ENCODE measurements at regions of chr1 and their contacts with region 1.

Region 1: DNA sequence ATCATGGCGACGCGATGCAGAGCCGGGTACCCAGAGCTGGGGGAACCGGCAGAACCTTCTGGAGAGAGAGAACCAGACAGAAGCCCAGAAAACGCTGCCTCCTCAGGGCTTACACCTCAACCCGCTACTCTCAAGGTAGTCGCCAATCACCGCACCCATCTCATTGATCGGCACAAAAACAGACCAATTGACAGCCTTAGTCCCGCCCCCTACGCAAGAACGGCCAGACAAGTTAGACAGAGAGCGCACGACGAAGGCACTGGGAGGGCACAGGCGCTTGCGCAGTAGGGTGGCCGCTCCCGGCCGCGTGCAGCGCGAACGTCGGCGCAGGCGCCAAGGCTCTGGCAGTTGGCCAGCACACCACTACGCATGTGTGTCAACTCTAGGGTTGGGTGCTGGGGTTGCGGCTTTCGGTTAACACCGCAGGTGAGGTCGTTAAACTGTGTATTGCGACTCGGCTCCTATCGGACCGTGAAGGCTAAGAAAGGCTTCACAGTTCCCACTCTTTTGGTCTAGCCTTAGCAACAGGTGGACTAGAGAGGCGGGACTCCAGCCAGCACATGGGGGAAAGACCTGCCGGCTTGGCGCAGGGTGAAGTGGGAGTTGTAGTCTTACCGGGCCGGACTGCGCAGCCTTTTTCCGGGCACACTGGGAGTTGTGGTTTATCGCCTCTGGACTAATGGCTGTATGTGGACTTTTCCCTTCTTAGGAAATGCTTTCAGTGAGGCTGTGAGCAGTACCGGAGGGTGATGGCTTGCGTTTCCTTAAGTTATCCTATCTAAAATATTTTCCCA is at the starts of genes CCT3 and TSACC:
- H3K4me3 ChIP-seq: peak within 1 kb of the TSS; percentile 71
- H3K27ac ChIP-seq: peak within 1 kb of the TSS; percentile 68
- H3K4me1 ChIP-seq: peaks cover 5% of the 10 kb centered on the region; the same call in 1 of the 2 replicates
- CTCF ChIP-seq: no peak

Region 2: DNA sequence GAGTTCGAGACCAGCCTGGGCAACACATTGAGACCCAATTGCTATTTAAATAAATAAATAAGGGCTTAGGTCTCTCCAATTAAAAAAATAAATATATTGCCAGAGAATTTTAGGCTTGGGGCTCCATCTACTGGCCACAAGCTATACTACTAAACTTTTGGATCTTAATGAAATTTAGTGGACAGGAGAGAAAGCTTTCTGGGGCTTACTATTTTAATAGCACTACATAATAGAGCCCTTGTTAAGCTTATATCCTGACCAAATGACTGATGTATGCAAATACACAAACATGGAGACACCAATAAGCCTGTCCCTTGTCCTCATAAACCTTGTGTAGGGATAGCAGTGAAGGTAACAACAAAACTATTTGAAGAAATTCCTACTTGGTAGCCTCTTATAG is 18.7 kb before region 1 on chr1:
- CTCF ChIA-PET with region 1: interaction called, 14 read pairs
- POLR2A ChIA-PET with region 1: interaction called, 4 read pairs
- H3K4me3 ChIP-seq: no peak overlapping the region
- H3K27ac ChIP-seq: no peak overlapping the region
- H3K4me1 ChIP-seq: no peaks in the 10 kb centered on the region
- CTCF ChIP-seq: no peak

Measured in HEK293 (cell line).